Endothelial cell of umbilical vein (primary cell): ENCODE measurements at regions of chr20 and their contacts with region 1.

Region 1: GRCh38 chr20:35735828-35736470 is 6.1 kb downstream of the RBM39 start:
- DNase-seq: no peak
- H3K4me3 ChIP-seq: no peak overlapping the region
- H3K27ac ChIP-seq: no peak overlapping the region
- H3K4me1 ChIP-seq: peaks cover 32% of the 10 kb centered on the region
- H3K27me3 ChIP-seq: no peaks in the 10 kb centered on the region
- CTCF ChIP-seq: no peak
- POLR2A ChIP-seq: no peak

Region 2: GRCh38 chr20:35720165-35721123 is 15.5 kb before region 1 on chr20:
- CTCF ChIA-PET with region 1: interaction called, 5 read pairs
- POLR2A ChIA-PET with region 1: interaction called, 9 read pairs
- dilution Hi-C with region 1: no loop called
- intact Hi-C with region 1: loop called (anchors 2 kb)
- DNase-seq: no peak
- H3K4me3 ChIP-seq: no peak overlapping the region
- H3K27ac ChIP-seq: no peak overlapping the region
- H3K4me1 ChIP-seq: no peaks in the 10 kb centered on the region
- H3K27me3 ChIP-seq: no peaks in the 10 kb centered on the region
- CTCF ChIP-seq: no peak
- POLR2A ChIP-seq: no peak

Region 3: DNA sequence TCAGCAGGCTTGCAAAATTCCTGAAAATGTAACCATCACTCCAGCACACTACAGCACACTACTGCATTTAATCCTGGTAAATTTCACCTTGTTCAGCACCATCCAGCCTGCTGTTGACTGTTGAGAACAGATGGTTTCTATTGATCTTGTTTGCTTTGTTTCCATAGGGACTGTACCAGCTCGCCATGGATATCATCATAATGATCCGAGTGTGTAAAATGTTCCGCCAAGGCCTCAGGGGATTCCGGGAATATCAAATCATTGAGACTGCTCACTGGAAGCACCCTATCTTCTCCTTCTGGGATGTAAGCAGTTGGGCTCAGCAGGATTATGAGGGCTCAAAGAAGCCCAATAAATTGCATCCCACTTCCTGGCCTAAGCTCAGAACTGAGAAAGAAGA is 236.5 kb after region 1 on chr20:
- CTCF ChIA-PET with region 1: no interaction called
- POLR2A ChIA-PET with region 1: no interaction called
- dilution Hi-C with region 1: no loop called
- intact Hi-C with region 1: no loop called
- DNase-seq: no peak
- H3K4me3 ChIP-seq: no peak overlapping the region
- H3K27ac ChIP-seq: no peak overlapping the region
- H3K4me1 ChIP-seq: no peaks in the 10 kb centered on the region
- H3K27me3 ChIP-seq: peaks cover 2 to 3% of the 10 kb centered on the region in 2 experiments
- CTCF ChIP-seq: no peak
- POLR2A ChIP-seq: no peak

Region 4: DNA sequence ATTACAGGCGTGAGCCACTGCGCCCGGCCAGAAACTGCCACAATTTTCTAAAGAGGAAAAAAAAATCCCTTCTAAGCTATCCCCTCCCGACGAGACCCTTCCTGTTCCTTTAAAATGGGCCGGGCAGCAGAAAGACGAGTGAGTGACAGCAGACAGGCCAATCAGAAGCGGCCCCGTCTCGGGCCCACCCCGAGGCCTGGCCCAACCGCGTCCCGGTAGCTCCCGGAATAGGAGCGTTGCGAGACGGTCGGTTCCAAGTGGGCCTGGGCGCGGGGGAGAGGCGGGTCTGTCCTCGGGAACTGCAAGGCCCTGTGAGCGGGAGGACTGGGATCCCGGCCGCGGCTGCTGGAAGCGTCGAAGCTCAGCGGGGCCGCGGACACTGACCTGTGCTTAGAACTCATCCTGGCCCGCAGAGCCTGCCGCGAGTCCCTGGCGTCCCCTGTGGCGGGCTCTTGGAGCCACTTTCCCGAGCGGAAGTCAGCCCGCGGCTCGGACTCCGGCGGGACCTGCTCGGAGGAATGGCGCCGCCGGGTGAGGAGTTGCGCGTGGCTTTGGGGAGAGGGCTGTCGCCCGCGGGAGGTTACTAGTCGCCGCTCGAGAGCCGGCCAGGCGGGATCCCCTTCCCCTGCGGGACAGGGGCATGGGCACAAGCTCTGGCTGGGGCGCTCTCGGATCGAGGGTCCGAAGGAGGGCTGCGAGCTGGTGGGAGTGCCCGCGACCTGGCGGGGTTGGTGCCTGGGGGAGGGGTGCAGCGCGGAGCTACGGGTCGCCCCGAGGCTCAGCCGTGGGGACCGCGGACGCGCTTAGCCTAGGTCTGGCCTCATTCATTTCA is 1443.1 kb after region 1 on chr20 and contains the starts of genes MROH8 and RPN2:
- CTCF ChIA-PET with region 1: no interaction called
- POLR2A ChIA-PET with region 1: no interaction called
- dilution Hi-C with region 1: no loop called
- intact Hi-C with region 1: no loop called
- DNase-seq: peak; percentile 99
- H3K4me3 ChIP-seq: peak within 1 kb of the TSS; percentile 92 to 97 (median 96)
- H3K27ac ChIP-seq: peak within 1 kb of the TSS; percentile 94
- H3K4me1 ChIP-seq: peaks cover 15% of the 10 kb centered on the region
- H3K27me3 ChIP-seq: no peaks in the 10 kb centered on the region
- CTCF ChIP-seq: no peak
- POLR2A ChIP-seq: peak; percentile 57
- total RNA-seq, gene MROH8: 1.5 and 2.7 TPM in 2 replicates
- total RNA-seq, gene RPN2: 243 and 283 TPM in 2 replicates